A549 (cell line): ENCODE measurements at regions of chr5 and their contacts with region 1.

Region 1: GRCh38 chr5:54844905-54845566 is 140.4 kb downstream of the ESM1 start:
- DNase-seq: peak in 1 of 2 experiments; percentile 35
- ATAC-seq: peak in 1 of 2 experiments; percentile 54; a peak in 1 of 6 replicates
- H3K4me3 ChIP-seq: no peak overlapping the region
- H3K27ac ChIP-seq: no peak overlapping the region
- H3K4me1 ChIP-seq: no peaks in the 10 kb centered on the region
- CTCF ChIP-seq: peak; percentile 72
- EP300 ChIP-seq: no peak
- POLR2A ChIP-seq: no peak
- RAD21 ChIP-seq: peak; percentile 64 to 79

Region 2: DNA sequence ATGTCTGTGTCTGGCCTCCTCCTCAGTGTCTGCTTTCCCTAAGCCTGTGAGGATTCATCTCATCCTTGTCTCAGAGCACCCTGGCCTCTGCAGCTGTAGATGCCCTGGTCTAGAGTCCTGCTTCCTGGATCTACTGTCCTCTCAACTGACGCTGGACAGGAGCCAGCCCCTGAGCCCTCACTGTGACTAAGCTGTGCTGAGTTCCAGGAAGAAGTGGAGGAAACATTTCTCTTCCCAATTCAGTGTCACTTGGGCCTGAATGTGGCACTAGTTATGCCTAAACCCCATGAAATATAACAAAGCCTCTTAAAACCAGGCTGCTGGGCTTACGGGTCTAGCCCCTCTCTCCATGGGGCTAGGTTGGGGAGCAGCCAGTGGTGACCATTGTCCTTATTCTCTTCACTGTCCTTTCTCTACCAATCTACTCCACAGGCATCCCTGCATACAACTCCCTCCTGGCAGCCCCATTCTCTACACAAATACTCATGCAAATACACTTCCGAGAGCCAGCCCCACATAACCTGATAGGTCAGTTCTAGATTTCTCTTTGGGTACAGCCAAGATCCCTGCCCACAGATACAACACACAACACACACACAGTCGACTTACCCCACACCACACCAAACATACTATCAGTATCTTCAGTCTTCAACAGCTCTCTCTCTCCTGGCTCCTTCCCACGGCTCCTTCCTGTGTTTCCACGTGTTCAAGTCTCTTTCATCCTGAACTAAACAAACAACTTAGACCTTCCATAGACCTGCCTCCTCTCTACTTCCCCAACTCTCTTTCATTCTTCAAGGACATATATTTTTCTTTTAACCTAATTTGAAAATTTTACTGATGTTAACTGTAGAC is 106.7 kb before region 1 on chr5:
- CTCF ChIA-PET with region 1: no interaction called
- POLR2A ChIA-PET with region 1: no interaction called
- DNase-seq: no peak
- ATAC-seq: peak; percentile 27 to 30; a peak in 3 of 6 replicates
- H3K4me3 ChIP-seq: no peak overlapping the region
- H3K27ac ChIP-seq: no peak overlapping the region
- H3K4me1 ChIP-seq: peaks cover 5% of the 10 kb centered on the region; the same call in 1 of the 3 replicates
- CTCF ChIP-seq: no peak
- EP300 ChIP-seq: no peak
- POLR2A ChIP-seq: no peak
- RAD21 ChIP-seq: no peak

Region 3: DNA sequence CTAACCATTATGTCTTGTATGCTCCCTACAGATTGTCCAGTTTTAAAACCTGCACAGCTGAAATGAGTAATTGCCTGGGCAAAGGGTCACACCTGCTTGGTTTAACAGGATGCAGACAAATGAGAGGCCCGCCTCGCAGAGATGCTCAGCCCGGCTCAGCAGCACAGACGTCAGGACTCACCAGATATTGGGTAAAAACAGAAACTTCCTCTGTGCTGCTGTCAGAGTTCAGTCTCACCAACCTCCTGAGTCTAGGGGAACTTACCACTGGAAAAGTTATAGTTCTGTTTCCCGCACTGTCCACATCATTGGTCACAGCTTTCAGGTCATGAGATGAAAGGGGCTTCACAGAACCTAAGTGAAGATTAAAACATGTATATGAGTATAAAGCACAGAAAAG is 12.2 kb before region 1 on chr5:
- CTCF ChIA-PET with region 1: interaction called, 20 read pairs
- POLR2A ChIA-PET with region 1: no interaction called
- DNase-seq: no peak
- ATAC-seq: no peak
- H3K4me3 ChIP-seq: no peak overlapping the region
- H3K27ac ChIP-seq: no peak overlapping the region
- H3K4me1 ChIP-seq: no peaks in the 10 kb centered on the region
- CTCF ChIP-seq: no peak
- EP300 ChIP-seq: no peak
- POLR2A ChIP-seq: no peak
- RAD21 ChIP-seq: no peak